ENCODE measurements at regions of chrX and their contacts with region 1.

Region 1: DNA sequence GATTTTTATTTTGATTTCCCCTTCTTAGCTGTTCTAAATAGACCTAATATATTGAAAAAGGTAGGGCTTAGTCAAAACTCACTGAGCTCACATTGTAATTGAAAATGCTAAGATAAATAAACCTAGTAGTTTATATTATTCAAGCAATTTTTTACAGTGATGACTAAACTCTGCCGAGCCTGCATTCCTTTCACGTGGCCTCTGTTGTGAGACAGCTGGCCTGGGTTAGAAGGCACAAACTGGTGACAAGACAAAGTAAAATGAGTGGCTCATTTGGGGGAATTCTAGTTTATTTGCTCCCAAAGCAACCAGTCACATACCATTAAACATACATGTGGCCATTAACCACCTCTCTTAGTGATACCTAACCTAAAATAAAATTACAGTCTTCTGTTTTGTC is 169.4 kb upstream of the TEX13C start:
- DNase-seq: no peak
- H3K4me3 ChIP-seq: no peak overlapping the region
- H3K27ac ChIP-seq: no peak overlapping the region
- H3K4me1 ChIP-seq: no peaks in the 10 kb centered on the region
- H3K27me3 ChIP-seq: no peaks in the 10 kb centered on the region
- CTCF ChIP-seq: no peak
- EP300 ChIP-seq: no peak
- POLR2A ChIP-seq: no peak

Region 2: DNA sequence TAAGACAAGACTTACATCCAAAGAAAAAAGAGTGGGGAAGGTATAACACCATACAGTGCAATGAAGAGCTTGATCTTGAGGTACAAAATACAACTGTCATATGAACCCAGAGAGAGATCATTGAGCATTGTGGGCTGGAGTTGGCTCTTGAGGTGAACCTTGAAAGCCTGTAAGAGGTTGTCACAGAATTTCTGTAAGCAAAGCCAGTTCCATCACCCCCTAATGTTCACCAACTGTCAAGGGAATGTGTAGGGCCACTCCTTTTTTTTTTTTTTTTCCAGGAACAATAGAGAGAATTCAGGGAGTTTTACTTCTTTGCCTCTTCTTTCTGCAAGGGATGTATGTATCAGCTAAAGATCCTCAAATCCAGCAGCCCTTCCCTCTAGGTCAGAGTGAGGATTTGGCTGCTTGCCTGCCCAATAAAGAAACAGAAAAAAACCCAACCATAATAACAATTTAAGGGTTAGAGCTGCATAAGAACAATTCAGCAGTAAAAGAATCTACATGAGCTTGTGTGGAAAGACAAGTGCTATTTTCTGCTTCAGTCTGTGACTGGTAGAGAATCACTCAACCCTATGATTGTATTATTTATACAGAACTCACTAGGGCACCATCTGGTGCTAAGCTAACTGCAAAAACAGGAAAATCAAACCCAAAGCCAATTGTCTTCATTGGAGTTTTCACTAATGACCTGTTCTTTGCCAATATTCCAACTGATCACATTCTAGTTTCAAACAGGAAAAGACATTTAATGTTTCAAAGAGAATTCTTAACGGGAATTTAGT is 48.1 kb before region 1 on chrX:
- intact Hi-C with region 1: no loop called
- DNase-seq: no peak
- H3K4me3 ChIP-seq: no peak overlapping the region
- H3K27ac ChIP-seq: no peak overlapping the region
- H3K4me1 ChIP-seq: no peaks in the 10 kb centered on the region
- H3K27me3 ChIP-seq: no peaks in the 10 kb centered on the region
- CTCF ChIP-seq: no peak
- EP300 ChIP-seq: no peak
- POLR2A ChIP-seq: no peak

Region 3: GRCh38 chrX:125205133-125205917 is 55.1 kb after region 1 on chrX:
- intact Hi-C with region 1: loop called in 1 of 4 experiments (anchors 10 kb)
- DNase-seq: peak in 1 of 5 donors; percentile 9
- H3K4me3 ChIP-seq: peak overlapping the region; percentile 33
- H3K27ac ChIP-seq: no peak overlapping the region
- H3K4me1 ChIP-seq: no peaks in the 10 kb centered on the region
- H3K27me3 ChIP-seq: no peaks in the 10 kb centered on the region
- CTCF ChIP-seq: no peak
- EP300 ChIP-seq: no peak
- POLR2A ChIP-seq: no peak